Naive thymus-derived CD4-positive, alpha-beta T cell (primary cell): ENCODE measurements at regions of chr3 and their contacts with region 1.

Region 1: GRCh38 chr3:4978204-4978965 is 852 bp upstream of the BHLHE40 start:
- DNase-seq: peak in 7 of 9 donors; percentile 29 to 66 (median 36)
- ATAC-seq: peak; percentile 65
- H3K4me3 ChIP-seq: peak overlapping the region; percentile 71
- H3K4me3 Mint-ChIP-seq: peak overlapping the region; percentile 86 to 100 (median 92)
- H3K27ac ChIP-seq: peak overlapping the region; percentile 59
- H3K27ac Mint-ChIP-seq: peak overlapping the region; percentile 52 to 100 (median 89)
- H3K4me1 ChIP-seq: peaks cover 17 to 38% of the 10 kb centered on the region in 2 donors
- H3K4me1 Mint-ChIP-seq: peaks cover 29 to 46% (median 42%) of the 10 kb centered on the region in 7 donors
- H3K27me3 ChIP-seq: no peaks in the 10 kb centered on the region
- H3K27me3 Mint-ChIP-seq: peaks cover 0 to 2% (median 0%) of the 10 kb centered on the region in 5 donors

Region 2: GRCh38 chr3:4741404-4742307 is 236.7 kb before region 1 on chr3:
- CTCF ChIA-PET with region 1: no interaction called
- POLR2A ChIA-PET with region 1: no interaction called
- intact Hi-C with region 1: loop called in 1 of 2 experiments (anchors 1 kb)
- DNase-seq: no peak
- ATAC-seq: peak; percentile 39
- H3K4me3 ChIP-seq: no peak overlapping the region
- H3K4me3 Mint-ChIP-seq: peak overlapping the region in 6 of 10 donors; percentile 26 to 75 (median 66)
- H3K27ac ChIP-seq: no peak overlapping the region
- H3K27ac Mint-ChIP-seq: peak overlapping the region in 5 of 9 donors; percentile 22 to 94 (median 67)
- H3K4me1 ChIP-seq: peaks cover 37 to 43% of the 10 kb centered on the region in 2 donors
- H3K4me1 Mint-ChIP-seq: peaks cover 44 to 70% (median 51%) of the 10 kb centered on the region in 7 donors
- H3K27me3 ChIP-seq: no peaks in the 10 kb centered on the region
- H3K27me3 Mint-ChIP-seq: no peaks in the 10 kb centered on the region

Region 3: GRCh38 chr3:4834403-4834866 is 143.9 kb before region 1 on chr3:
- CTCF ChIA-PET with region 1: interaction called, 5 read pairs
- POLR2A ChIA-PET with region 1: interaction called, 8 read pairs
- intact Hi-C with region 1: loop called (anchors 1 kb)
- DNase-seq: peak in 5 of 9 donors; percentile 28 to 79 (median 39)
- ATAC-seq: peak; percentile 64
- H3K4me3 ChIP-seq: no peak overlapping the region
- H3K4me3 Mint-ChIP-seq: peak overlapping the region; percentile 21 to 86 (median 47)
- H3K27ac ChIP-seq: peak overlapping the region; percentile 55
- H3K27ac Mint-ChIP-seq: peak overlapping the region; percentile 74 to 99 (median 90)
- H3K4me1 ChIP-seq: peaks cover 53 to 67% of the 10 kb centered on the region in 2 donors
- H3K4me1 Mint-ChIP-seq: peaks cover 56 to 89% (median 80%) of the 10 kb centered on the region in 7 donors
- H3K27me3 ChIP-seq: no peaks in the 10 kb centered on the region
- H3K27me3 Mint-ChIP-seq: peaks cover 0 to 3% (median 0%) of the 10 kb centered on the region in 5 donors

Region 4: GRCh38 chr3:4888913-4889846 is 89.2 kb before region 1 on chr3:
- CTCF ChIA-PET with region 1: interaction called, 3 read pairs
- POLR2A ChIA-PET with region 1: no interaction called
- intact Hi-C with region 1: loop called (anchors 1 to 5 kb)
- DNase-seq: peak in 6 of 9 donors; percentile 9 to 51 (median 39)
- ATAC-seq: peak; percentile 90
- H3K4me3 ChIP-seq: no peak overlapping the region
- H3K4me3 Mint-ChIP-seq: peak overlapping the region in 8 of 10 donors; percentile 0 to 63 (median 36)
- H3K27ac ChIP-seq: no peak overlapping the region
- H3K27ac Mint-ChIP-seq: peak overlapping the region in 7 of 9 donors; percentile 18 to 91 (median 57)
- H3K4me1 ChIP-seq: peaks cover 13 to 15% of the 10 kb centered on the region in 2 donors
- H3K4me1 Mint-ChIP-seq: peaks cover 17 to 39% (median 18%) of the 10 kb centered on the region in 7 donors
- H3K27me3 ChIP-seq: no peaks in the 10 kb centered on the region
- H3K27me3 Mint-ChIP-seq: no peaks in the 10 kb centered on the region

Region 5: DNA sequence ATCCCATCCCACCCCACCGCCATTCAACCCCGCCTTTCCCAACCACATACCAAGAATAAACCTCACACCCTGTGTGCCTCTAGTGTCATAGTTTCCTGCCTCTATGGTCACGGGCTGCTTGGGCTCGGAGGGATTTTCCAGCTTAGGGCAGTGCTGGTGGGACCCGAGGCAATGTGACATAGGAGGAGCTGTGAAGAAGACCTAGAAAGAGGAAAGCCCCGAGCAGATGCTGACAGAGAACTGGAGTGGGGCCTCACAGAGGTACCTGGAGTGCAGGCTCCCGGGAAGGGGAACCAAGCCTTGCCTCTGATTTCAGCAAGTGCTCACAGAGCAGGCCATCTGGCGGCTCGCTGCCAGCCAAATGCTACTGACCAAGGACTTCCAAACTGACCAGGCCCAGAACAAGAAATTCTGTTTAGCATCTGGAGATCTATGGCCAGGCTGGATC is 28.4 kb after region 1 on chr3:
- CTCF ChIA-PET with region 1: no interaction called
- POLR2A ChIA-PET with region 1: interaction called, 3 read pairs
- intact Hi-C with region 1: loop called in 1 of 2 experiments (anchors 1 kb)
- DNase-seq: peak in 2 of 9 donors; percentile 22 to 82
- ATAC-seq: peak; percentile 83
- H3K4me3 ChIP-seq: no peak overlapping the region
- H3K4me3 Mint-ChIP-seq: peak overlapping the region in 2 of 10 donors; percentile 42 to 55
- H3K27ac ChIP-seq: no peak overlapping the region
- H3K27ac Mint-ChIP-seq: peak overlapping the region in 5 of 9 donors; percentile 28 to 82 (median 54)
- H3K4me1 ChIP-seq: peaks cover 0 to 39% of the 10 kb centered on the region in 2 donors
- H3K4me1 Mint-ChIP-seq: peaks cover 0 to 67% (median 7%) of the 10 kb centered on the region in 7 donors
- H3K27me3 ChIP-seq: no peaks in the 10 kb centered on the region
- H3K27me3 Mint-ChIP-seq: peaks cover 0 to 8% (median 0%) of the 10 kb centered on the region in 5 donors

Region 6: DNA sequence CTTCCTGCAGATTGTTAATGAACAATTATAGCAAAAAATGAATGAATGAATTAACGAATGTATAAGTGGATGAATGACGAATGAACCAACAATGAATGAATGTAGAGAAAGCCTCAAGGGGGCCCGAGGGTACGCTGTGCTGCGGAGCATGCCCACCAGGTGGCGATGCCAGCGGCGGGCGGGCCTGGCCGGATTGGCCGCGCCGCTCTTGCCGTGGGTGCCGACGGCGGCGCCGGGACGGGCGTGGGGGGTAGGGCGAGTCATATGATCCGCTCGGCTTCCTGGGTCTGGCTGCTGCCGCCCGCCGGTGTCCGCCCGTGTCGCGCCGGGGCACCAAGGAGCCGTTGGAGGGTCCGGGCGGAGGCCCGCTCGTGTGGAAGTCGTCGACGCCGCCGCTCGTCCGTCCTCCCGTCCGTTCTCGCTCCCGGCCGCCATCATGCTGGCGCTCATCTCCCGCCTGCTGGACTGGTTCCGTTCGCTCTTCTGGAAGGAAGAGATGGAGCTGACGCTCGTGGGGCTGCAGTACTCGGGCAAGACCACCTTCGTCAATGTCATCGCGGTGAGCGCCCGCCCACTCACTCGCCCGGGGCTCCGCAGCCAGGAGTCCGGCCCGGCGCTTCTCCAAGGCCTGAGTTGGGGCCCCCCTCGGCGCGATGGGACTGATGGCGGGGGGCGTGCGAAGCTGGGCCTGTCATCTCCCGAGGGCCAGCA is 143.8 kb after region 1 on chr3 and contains the start of gene ARL8B:
- CTCF ChIA-PET with region 1: interaction called, 4 read pairs
- POLR2A ChIA-PET with region 1: no interaction called
- intact Hi-C with region 1: loop called (anchors 2 kb)
- DNase-seq: peak; percentile 82 to 97 (median 89)
- ATAC-seq: peak; percentile 100
- H3K4me3 ChIP-seq: peak within 1 kb of the TSS; percentile 92
- H3K4me3 Mint-ChIP-seq: peak within 1 kb of the TSS; percentile 81 to 96 (median 88)
- H3K27ac ChIP-seq: peak within 1 kb of the TSS; percentile 88
- H3K27ac Mint-ChIP-seq: peak within 1 kb of the TSS; percentile 79 to 96 (median 88)
- H3K4me1 ChIP-seq: peaks cover 22% of the 10 kb centered on the region in 2 donors
- H3K4me1 Mint-ChIP-seq: peaks cover 25 to 54% (median 47%) of the 10 kb centered on the region in 7 donors
- H3K27me3 ChIP-seq: no peaks in the 10 kb centered on the region
- H3K27me3 Mint-ChIP-seq: no peaks in the 10 kb centered on the region
- total RNA-seq, gene ARL8B: 43.7 to 61.6 (median 48.4) TPM